GM12878 (cell line): ENCODE measurements at regions of chr6 and their contacts with region 1.

Region 1: DNA sequence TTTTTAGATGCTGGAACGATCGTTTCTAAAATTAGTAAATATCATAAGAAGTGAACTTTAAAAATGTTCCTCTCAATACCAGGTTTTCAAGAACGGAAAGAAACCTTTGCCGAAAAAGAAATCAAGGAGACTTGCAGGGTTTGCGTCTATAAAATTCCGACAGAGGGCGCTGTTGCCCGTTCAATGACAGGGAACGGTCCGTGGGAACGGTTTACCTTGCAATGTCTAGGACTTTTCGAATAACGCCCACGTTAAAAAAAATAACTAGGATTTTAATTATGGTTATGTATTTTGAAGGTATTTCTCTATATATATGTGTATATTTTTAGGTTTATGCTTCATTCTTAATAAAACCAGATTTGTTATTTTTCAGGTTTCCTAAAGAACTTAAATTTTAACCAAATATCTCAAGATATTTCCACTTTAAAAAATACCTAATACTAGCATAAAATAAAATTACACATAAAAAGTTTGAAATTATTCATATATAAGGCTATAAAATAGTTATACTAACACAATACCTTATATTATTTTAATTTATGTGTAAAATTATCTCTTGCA is 2.5 kb upstream of the TFAP2B start:
- DNase-seq: peak; percentile 19
- ATAC-seq: peak; percentile 85
- H3K4me3 ChIP-seq: peak overlapping the region; percentile 75
- H3K27ac ChIP-seq: no peak overlapping the region
- H3K4me1 ChIP-seq: no peaks in the 10 kb centered on the region
- H3K27me3 ChIP-seq: peaks cover 2 to 20% of the 10 kb centered on the region in 2 experiments; a peak in 3 of 4 replicates
- CTCF ChIP-seq: peak; percentile 68 to 92 (median 79)
- EP300 ChIP-seq: no peak
- POLR2A ChIP-seq: no peak
- RAD21 ChIP-seq: peak; percentile 92

Region 2: GRCh38 chr6:50929323-50929722 is 113.1 kb after region 1 on chr6:
- CTCF ChIA-PET with region 1: no interaction called
- POLR2A ChIA-PET with region 1: no interaction called
- RAD21 ChIA-PET with region 1: no interaction called
- SMC1A ChIA-PET with region 1: no interaction called
- in situ Hi-C with region 1: no loop called
- intact Hi-C with region 1: no loop called
- DNase-seq: no peak
- ATAC-seq: no peak
- H3K4me3 ChIP-seq: no peak overlapping the region
- H3K27ac ChIP-seq: no peak overlapping the region
- H3K4me1 ChIP-seq: no peaks in the 10 kb centered on the region
- H3K27me3 ChIP-seq: no peaks in the 10 kb centered on the region
- CTCF ChIP-seq: no peak
- EP300 ChIP-seq: no peak
- POLR2A ChIP-seq: no peak
- RAD21 ChIP-seq: no peak

Region 3: GRCh38 chr6:51459958-51460357 is 643.8 kb after region 1 on chr6:
- CTCF ChIA-PET with region 1: no interaction called
- POLR2A ChIA-PET with region 1: no interaction called
- RAD21 ChIA-PET with region 1: no interaction called
- SMC1A ChIA-PET with region 1: no interaction called
- in situ Hi-C with region 1: no loop called
- intact Hi-C with region 1: loop called (anchors 5 kb)
- DNase-seq: peak; percentile 73
- ATAC-seq: peak; percentile 93
- H3K4me3 ChIP-seq: no peak overlapping the region
- H3K27ac ChIP-seq: peak overlapping the region; percentile 43; the same call in 1 of the 2 replicates
- H3K4me1 ChIP-seq: peaks cover 7% of the 10 kb centered on the region; the same call in 1 of the 2 replicates
- H3K27me3 ChIP-seq: no peaks in the 10 kb centered on the region
- CTCF ChIP-seq: no peak
- EP300 ChIP-seq: peak; percentile 85 to 95; a peak in 3 of 4 replicates
- POLR2A ChIP-seq: no peak
- RAD21 ChIP-seq: no peak

Region 4: DNA sequence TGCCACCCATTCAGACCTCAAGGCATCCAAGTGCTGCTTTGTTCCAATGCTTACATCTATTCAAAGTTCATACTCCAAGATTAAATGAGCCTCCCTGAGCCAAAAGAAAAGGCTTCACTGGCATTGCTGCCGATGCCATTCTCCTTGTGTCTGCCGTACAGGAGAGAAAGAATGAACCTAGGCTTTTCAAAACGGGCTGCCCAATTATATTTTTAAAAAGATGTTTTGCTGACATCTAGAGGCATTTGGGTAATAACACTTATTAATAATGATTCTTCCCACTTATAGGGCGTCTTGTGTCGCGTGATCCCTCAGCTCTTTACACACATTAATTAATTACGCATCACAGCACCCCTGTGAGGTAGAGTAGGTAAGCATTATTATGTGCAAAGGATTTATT is 725.7 kb after region 1 on chr6:
- CTCF ChIA-PET with region 1: interaction called, 5 read pairs
- POLR2A ChIA-PET with region 1: interaction called, 3 read pairs
- RAD21 ChIA-PET with region 1: interaction called, 4 read pairs
- SMC1A ChIA-PET with region 1: no interaction called
- in situ Hi-C with region 1: loop called (anchors 5 kb)
- intact Hi-C with region 1: loop called (anchors 1 kb)
- DNase-seq: no peak
- ATAC-seq: peak; percentile 59
- H3K4me3 ChIP-seq: no peak overlapping the region
- H3K27ac ChIP-seq: no peak overlapping the region
- H3K4me1 ChIP-seq: no peaks in the 10 kb centered on the region
- H3K27me3 ChIP-seq: no peaks in the 10 kb centered on the region
- CTCF ChIP-seq: peak in 1 of 3 experiments; percentile 41; a peak in 2 of 6 replicates
- EP300 ChIP-seq: no peak
- POLR2A ChIP-seq: no peak
- RAD21 ChIP-seq: peak; percentile 37

Region 5: GRCh38 chr6:51844336-51844735 is 1028.1 kb after region 1 on chr6:
- CTCF ChIA-PET with region 1: interaction called, 3 read pairs
- POLR2A ChIA-PET with region 1: no interaction called
- RAD21 ChIA-PET with region 1: no interaction called
- SMC1A ChIA-PET with region 1: no interaction called
- in situ Hi-C with region 1: no loop called
- intact Hi-C with region 1: loop called (anchors 5 kb)
- DNase-seq: no peak
- ATAC-seq: no peak
- H3K4me3 ChIP-seq: no peak overlapping the region
- H3K27ac ChIP-seq: no peak overlapping the region
- H3K4me1 ChIP-seq: no peaks in the 10 kb centered on the region
- H3K27me3 ChIP-seq: peaks cover 0 to 2% of the 10 kb centered on the region in 2 experiments; a peak in 2 of 4 replicates
- CTCF ChIP-seq: no peak; a peak in 1 of 6 replicates
- EP300 ChIP-seq: no peak
- POLR2A ChIP-seq: no peak
- RAD21 ChIP-seq: peak; percentile 42; the same call in 1 of the 2 replicates